ENCODE measurements at regions of chr18 and their contacts with region 1.

Region 1: GRCh38 chr18:59697236-59697932 is at the start of gene CCBE1:
- DNase-seq: no peak
- H3K4me3 ChIP-seq: peak within 1 kb of the TSS; percentile 95
- H3K27ac ChIP-seq: peak within 1 kb of the TSS; percentile 25
- H3K27me3 ChIP-seq: no peaks in the 10 kb centered on the region
- CTCF ChIP-seq: peak; percentile 96
- polyA plus RNA-seq, gene CCBE1: 40.4 and 51.5 TPM in 2 replicates

Region 2: DNA sequence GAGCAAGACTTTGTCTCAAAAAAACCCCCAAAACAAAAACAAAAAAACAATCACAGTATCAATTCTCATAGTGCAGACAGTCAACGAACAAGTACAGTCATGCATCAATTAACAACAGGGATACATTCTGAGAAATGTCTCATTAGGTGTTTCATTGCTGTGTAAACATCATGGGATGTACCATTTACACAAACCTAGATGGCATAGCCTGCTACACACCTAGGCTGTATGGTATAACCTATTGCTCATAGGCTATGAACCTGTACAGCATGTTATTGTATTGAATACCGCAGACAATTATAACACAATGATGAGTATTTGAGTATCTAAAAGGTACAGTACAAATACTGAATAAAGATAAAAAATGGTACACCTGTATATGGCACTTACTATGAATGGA is 270.5 kb before region 1 on chr18:
- CTCF ChIA-PET with region 1: no interaction called
- POLR2A ChIA-PET with region 1: no interaction called
- DNase-seq: no peak
- H3K4me3 ChIP-seq: no peak overlapping the region
- H3K27ac ChIP-seq: no peak overlapping the region
- H3K27me3 ChIP-seq: peaks cover 5% of the 10 kb centered on the region
- CTCF ChIP-seq: no peak

Region 3: DNA sequence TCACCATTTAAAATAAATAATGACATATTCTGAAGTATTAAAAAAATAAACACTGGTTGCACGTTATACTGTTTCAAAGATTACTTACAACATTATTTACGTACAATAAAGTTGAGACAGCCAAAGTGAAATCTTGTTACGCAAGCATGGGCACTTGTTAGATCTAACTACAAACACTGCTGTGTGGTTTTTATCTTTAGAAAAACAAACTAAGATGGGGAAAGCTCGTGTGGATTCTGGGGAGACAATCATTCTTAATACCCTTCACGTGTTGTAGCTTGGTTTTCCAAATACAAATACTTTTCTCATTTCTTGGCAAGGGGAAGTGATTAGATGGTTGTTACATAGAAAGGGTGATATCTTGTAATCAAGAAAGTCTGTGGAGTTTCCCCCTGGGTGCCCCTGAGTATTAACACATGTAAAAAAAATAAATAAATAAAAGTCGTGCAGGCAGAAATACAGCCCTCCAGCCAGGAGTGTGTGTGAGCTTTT is 212.5 kb before region 1 on chr18:
- CTCF ChIA-PET with region 1: interaction called, 12 read pairs
- POLR2A ChIA-PET with region 1: interaction called, 3 read pairs
- DNase-seq: peak; percentile 80
- H3K4me3 ChIP-seq: no peak overlapping the region
- H3K27ac ChIP-seq: no peak overlapping the region
- H3K27me3 ChIP-seq: no peaks in the 10 kb centered on the region
- CTCF ChIP-seq: no peak

Region 4: GRCh38 chr18:59631583-59632181 is 65.7 kb before region 1 on chr18:
- CTCF ChIA-PET with region 1: interaction called, 23 read pairs
- POLR2A ChIA-PET with region 1: interaction called, 3 read pairs
- DNase-seq: no peak
- H3K4me3 ChIP-seq: no peak overlapping the region
- H3K27ac ChIP-seq: no peak overlapping the region
- H3K27me3 ChIP-seq: no peaks in the 10 kb centered on the region
- CTCF ChIP-seq: peak; percentile 87

Region 5: DNA sequence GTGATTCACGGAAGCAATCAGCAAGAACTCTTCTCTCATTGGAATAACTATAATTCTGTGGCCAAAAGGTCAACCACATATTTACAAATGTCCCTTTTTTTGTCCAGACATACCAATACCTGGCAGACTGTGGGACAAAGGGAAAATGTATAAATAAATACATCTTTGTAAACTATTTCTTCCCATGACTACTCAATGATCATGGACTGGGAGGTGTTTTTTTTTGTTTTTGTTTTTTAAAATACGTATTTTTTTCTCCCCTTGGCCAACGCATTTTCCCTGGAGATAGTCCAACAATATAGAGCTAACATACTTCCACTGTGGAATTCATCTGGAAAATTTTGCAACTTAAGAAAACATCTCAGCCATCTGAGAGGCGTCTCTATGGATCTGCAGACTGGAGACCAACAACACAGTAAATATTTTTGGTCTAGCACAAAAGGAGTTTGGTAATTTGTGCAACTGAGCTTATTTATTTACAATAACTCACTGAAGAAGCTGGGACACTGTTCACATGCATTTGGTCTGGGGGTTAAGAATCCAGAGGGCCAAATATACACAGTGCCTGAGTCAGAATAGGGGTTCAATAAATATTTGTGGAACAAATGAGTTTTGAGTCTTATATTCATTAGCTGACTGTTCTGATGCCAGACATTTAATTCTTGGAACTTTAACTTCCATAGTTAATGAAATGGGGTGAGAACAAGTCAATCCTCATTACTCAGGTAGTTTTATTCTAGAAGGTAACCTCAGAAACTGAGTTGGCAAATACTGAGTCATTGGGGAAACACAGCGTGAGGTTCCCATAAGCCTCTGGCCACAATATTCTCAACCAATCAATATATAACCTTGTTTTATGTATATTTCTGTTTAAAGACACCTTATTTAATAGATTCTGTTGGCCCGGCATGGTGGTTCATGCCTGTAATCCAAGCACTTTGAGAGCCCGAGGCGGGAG is 36.3 kb before region 1 on chr18:
- CTCF ChIA-PET with region 1: interaction called, 26 read pairs
- POLR2A ChIA-PET with region 1: interaction called, 5 read pairs
- DNase-seq: no peak
- H3K4me3 ChIP-seq: no peak overlapping the region
- H3K27ac ChIP-seq: no peak overlapping the region
- H3K27me3 ChIP-seq: no peaks in the 10 kb centered on the region
- CTCF ChIP-seq: no peak

Region 6: DNA sequence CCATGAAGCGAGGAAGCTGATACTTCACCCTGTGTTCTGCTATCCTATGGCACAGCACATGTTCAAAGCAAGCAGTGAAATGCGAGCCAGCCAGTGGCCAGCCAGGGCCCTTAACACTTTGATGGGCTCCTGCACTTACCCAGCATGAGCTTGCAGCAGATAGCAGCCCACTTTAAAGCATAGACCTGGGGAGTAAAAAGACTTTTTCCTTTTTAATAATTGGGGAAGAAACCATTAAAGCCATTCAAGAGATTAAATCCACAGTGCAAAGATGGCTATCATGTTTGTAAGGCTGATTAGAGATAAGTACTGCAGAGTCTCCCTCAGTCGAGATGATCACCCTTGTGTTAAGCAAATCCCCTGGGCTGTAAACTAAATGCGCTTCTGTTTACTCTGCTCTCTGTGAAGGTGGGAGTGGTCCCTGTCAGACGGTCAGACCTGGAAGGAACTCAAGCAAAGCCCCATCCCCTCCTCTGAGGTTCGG is 15.8 kb before region 1 on chr18:
- CTCF ChIA-PET with region 1: interaction called, 33 read pairs
- POLR2A ChIA-PET with region 1: interaction called, 3 read pairs
- DNase-seq: no peak
- H3K4me3 ChIP-seq: no peak overlapping the region
- H3K27ac ChIP-seq: no peak overlapping the region
- H3K27me3 ChIP-seq: no peaks in the 10 kb centered on the region
- CTCF ChIP-seq: no peak

Region 7: DNA sequence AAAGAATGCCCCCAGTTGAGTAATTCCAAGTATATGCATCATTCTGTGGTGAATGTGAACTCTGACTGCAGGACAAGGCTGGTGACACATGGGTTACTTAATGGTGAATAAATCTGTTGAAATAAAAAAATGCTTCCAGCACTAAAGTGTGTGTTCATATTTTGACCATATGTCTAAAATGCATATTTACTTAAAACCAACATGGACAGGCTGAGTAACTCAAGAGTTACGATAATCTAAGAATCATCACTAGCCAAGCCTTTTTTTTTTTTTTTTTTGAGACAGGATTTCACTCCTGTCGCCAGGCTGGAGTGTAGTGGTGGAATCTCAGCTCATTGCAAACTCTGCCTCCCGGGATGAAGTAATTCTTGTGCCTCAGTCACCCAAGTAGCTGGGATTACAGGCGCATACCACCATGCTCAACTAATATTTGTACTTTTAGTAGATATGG is 46.9 kb after region 1 on chr18:
- CTCF ChIA-PET with region 1: interaction called, 17 read pairs
- POLR2A ChIA-PET with region 1: interaction called, 5 read pairs
- DNase-seq: peak; percentile 66
- H3K4me3 ChIP-seq: no peak overlapping the region
- H3K27ac ChIP-seq: peak overlapping the region; percentile 70
- H3K27me3 ChIP-seq: no peaks in the 10 kb centered on the region
- CTCF ChIP-seq: no peak

Region 8: DNA sequence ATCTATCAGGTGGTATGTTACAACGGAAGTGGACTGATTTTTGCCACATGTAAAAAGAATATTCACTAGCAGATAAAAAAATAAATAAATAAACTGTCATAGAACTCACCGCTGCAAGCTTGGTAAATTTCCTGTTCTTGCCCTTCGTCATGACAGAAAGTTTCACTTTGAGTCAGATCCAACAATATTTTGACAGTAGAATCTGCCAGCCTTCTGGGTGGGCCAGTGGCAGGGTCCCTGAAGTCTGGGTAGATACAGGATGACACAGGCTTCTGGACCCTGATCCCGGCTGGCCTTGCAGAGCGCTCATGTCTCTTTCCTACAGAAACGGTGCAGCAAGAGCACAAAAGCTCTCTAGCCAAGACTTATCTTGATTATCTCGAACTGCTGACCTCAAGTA is 104.6 kb after region 1 on chr18:
- CTCF ChIA-PET with region 1: interaction called, 20 read pairs
- POLR2A ChIA-PET with region 1: no interaction called
- DNase-seq: no peak
- H3K4me3 ChIP-seq: no peak overlapping the region
- H3K27ac ChIP-seq: no peak overlapping the region
- H3K27me3 ChIP-seq: no peaks in the 10 kb centered on the region
- CTCF ChIP-seq: no peak

Region 9: GRCh38 chr18:60292186-60292585 is 594.8 kb after region 1 on chr18:
- CTCF ChIA-PET with region 1: no interaction called
- POLR2A ChIA-PET with region 1: no interaction called
- DNase-seq: no peak
- H3K4me3 ChIP-seq: no peak overlapping the region
- H3K27ac ChIP-seq: no peak overlapping the region
- H3K27me3 ChIP-seq: no peaks in the 10 kb centered on the region
- CTCF ChIP-seq: no peak

Measured in AG04450 (cell line).